ENCODE measurements at regions of chr3 and their contacts with region 1.

Region 1: DNA sequence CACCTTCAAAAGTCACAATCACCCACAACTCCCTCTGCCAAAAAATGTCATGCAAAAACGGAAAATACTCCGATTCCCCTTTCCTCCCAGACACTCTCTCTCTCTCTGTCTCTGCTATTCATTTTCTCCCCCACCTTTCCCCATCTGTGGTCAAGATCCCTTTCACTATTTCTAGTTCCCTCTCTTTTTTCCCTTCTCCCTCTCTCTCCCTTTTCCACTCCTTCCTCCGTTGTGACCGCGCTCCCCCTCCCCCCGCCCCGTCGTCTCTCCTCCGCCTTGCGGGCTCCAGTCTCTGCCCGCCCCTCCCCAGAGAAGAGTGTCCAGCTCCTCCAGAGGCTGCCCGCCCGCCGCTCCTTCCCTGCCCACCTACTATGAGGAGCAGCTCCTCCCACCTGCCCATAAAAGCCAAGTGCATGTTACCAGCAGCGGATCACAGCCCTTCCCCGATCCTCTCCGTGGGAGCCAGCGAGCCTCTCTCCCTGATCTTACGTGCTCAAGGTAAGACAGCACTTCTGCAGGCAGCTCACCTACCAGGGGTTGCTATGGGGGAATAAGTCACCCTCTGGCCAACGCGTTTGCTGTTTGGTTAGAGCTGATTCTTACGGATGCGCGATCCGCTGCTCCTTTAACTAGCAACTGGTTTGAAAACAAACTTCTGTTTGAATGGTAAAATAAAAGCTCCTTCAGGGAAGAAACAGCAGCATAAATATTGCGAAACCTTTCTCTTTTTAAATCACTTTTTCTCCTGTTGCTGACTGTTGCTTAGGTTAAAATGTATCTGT is at the start of gene COL8A1:
- DNase-seq: peak; percentile 94
- H3K4me3 ChIP-seq: peak within 1 kb of the TSS; percentile 61 to 73 (median 67)
- H3K27ac ChIP-seq: peak within 1 kb of the TSS; percentile 89 to 93 (median 92)
- H3K4me1 ChIP-seq: peaks cover 13 to 69% (median 40%) of the 10 kb centered on the region in 4 donors
- H3K27me3 ChIP-seq: no peaks in the 10 kb centered on the region
- CTCF ChIP-seq: no peak
- EP300 ChIP-seq: no peak
- POLR2A ChIP-seq: no peak
- total RNA-seq, gene COL8A1: 31.5 to 139 (median 71.4) TPM

Region 2: DNA sequence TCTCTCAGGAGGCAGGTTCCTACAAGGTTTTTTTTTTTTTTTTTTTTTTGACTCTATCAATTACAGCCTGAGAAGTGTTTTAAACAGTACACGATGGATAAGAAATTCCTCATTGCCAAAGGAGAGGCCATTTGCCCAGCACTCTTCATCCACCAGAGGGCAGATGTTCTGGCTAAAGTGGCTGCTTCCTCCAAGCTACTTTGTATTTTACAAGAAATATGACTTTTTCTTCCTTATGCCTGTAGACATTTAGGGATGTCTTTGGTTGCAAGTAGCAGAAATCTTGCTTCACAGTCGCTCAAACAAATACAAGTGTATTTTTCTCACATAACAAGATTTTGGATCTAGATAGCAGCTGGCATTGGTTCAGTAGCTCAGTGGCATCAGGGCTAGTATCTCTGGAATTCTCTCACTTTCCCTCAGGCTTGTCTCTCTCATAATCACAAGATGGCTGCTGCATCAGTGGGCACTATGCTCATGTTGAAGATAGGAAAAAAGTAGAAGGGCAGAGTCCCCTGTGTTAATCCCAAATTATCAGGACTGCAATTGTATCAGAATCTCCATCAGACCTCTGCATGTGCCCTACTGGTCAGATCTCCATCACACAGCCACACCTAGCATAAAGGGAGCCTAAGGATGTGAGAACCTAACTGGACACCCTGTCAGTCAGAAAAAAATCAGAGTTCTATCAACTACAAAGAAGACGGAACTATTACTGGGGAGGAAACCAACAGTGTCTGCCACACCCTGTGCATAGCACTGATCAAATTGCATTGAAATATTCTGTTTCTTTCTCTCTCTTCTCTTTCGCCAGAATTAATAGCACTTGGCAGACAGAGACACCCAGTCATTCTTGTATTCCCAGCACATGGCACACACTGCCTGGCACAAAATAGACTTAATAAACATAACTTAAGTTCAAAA is 138.9 kb before region 1 on chr3:
- intact Hi-C with region 1: loop called (anchors 5 kb)
- DNase-seq: no peak
- H3K4me3 ChIP-seq: no peak overlapping the region
- H3K27ac ChIP-seq: no peak overlapping the region
- H3K4me1 ChIP-seq: peaks cover 13 to 46% (median 29%) of the 10 kb centered on the region in 4 donors
- H3K27me3 ChIP-seq: no peaks in the 10 kb centered on the region
- CTCF ChIP-seq: peak; percentile 63 to 80 (median 70)
- EP300 ChIP-seq: no peak
- POLR2A ChIP-seq: no peak

Region 3: GRCh38 chr3:99686955-99687612 is 48.7 kb after region 1 on chr3:
- intact Hi-C with region 1: loop called (anchors 2 kb)
- DNase-seq: no peak
- H3K4me3 ChIP-seq: no peak overlapping the region
- H3K27ac ChIP-seq: no peak overlapping the region
- H3K4me1 ChIP-seq: peaks cover 4 to 39% (median 29%) of the 10 kb centered on the region in 4 donors
- H3K27me3 ChIP-seq: no peaks in the 10 kb centered on the region
- CTCF ChIP-seq: peak; percentile 71 to 75 (median 74)
- EP300 ChIP-seq: no peak
- POLR2A ChIP-seq: no peak

Region 4: DNA sequence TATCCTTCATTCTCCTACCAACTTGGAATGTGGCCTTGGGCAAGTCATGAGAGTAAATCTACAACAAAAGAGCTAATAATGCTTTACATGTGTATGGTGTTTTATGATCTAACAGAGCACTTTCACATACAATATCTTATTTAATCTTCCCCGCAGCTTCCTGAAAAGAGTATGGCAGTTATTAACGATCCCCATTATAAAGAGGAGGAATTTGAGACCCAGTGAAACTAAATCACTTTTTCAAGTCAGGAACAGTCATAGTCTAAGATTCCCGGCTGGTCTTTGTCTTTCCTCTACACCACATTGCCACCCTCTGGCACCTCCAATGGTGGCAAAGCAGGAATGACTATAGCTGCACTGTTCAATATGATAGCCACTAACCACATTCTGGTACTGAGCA is 109.6 kb after region 1 on chr3:
- intact Hi-C with region 1: loop called (anchors 2 kb)
- DNase-seq: no peak
- H3K4me3 ChIP-seq: no peak overlapping the region
- H3K27ac ChIP-seq: no peak overlapping the region
- H3K4me1 ChIP-seq: peaks cover 0 to 2% (median 0%) of the 10 kb centered on the region in 4 donors
- H3K27me3 ChIP-seq: no peaks in the 10 kb centered on the region
- CTCF ChIP-seq: peak in 2 of 3 experiments; percentile 13 to 32
- EP300 ChIP-seq: no peak
- POLR2A ChIP-seq: no peak

Measured in esophagus muscularis mucosa (tissue), 4 donors.